ENCODE measurements at regions of chr20 and their contacts with region 1.

Region 1: DNA sequence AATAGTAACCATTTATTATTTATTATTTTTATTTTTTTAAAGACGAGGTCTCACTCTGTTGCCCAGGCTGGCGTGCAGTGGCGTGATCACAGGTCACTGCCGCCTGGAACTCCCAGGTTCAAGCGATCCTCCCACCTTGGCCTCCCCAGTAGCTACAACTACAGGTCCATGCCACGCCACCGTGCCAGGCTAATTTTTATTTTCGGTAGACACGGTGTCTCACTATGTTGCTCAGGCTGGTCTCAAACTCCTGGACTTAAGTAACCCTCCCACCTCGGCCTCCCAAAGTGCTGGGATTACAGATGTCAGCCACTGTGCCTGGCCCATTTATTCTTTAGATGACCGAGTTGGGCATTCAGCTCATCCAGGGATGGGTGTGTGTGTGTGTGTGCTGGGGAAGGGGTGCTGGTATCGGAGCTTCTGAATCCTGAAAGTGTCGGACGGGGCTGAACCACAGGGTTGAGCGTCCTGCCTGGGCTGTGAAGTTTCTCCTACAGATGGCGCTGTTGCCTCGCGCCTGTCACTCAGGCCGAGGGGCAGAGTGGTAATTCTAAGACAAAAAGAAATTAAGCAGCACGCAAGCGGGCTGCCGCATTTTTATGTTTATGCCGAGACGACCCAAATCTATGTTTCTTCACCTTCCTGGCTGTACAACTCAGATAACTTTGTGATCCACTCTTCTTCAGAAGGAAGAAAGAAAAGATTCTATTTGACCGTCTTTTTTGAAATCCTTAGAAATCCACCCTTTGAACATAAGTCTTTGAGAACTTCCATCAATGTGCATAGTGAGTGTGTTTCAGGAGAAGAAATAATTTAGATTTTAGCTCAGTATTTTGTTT is 252.8 kb downstream of the CDH26 start:
- DNase-seq: peak in 8 of 9 donors; percentile 20 to 61 (median 46)
- ATAC-seq: peak; percentile 81
- H3K4me3 ChIP-seq: no peak overlapping the region
- H3K4me3 Mint-ChIP-seq: peak overlapping the region in 1 of 10 donors; percentile 20
- H3K27ac ChIP-seq: no peak overlapping the region
- H3K27ac Mint-ChIP-seq: no peak overlapping the region
- H3K4me1 ChIP-seq: no peaks in the 10 kb centered on the region
- H3K4me1 Mint-ChIP-seq: peaks cover 0 to 17% (median 4%) of the 10 kb centered on the region in 7 donors
- H3K27me3 ChIP-seq: no peaks in the 10 kb centered on the region
- H3K27me3 Mint-ChIP-seq: peaks cover 0 to 16% (median 2%) of the 10 kb centered on the region in 5 donors

Region 2: DNA sequence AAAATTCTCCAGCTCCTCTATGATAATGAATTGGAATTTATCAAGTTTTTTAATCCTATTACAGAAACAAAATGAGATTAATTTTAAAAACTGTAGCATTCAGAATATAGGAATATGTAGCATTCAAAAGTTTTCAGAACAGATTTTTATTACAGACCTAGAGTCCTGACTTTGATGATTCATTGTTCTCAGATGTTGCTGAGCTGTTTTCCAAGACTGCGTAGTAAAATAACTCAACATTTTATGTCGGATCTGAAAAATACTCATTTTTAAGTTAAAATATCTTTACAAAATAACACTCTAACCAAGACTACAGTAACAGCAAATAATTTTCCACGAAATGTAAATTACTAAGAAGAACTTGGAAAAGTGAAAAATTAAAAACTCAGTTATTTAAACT is 344.7 kb before region 1 on chr20:
- CTCF ChIA-PET with region 1: no interaction called
- POLR2A ChIA-PET with region 1: no interaction called
- intact Hi-C with region 1: no loop called
- DNase-seq: no peak
- ATAC-seq: no peak
- H3K4me3 ChIP-seq: no peak overlapping the region
- H3K4me3 Mint-ChIP-seq: no peak overlapping the region
- H3K27ac ChIP-seq: no peak overlapping the region
- H3K27ac Mint-ChIP-seq: no peak overlapping the region
- H3K4me1 ChIP-seq: no peaks in the 10 kb centered on the region
- H3K4me1 Mint-ChIP-seq: no peaks in the 10 kb centered on the region
- H3K27me3 ChIP-seq: no peaks in the 10 kb centered on the region
- H3K27me3 Mint-ChIP-seq: peaks cover 0 to 9% (median 4%) of the 10 kb centered on the region in 5 donors

Region 3: DNA sequence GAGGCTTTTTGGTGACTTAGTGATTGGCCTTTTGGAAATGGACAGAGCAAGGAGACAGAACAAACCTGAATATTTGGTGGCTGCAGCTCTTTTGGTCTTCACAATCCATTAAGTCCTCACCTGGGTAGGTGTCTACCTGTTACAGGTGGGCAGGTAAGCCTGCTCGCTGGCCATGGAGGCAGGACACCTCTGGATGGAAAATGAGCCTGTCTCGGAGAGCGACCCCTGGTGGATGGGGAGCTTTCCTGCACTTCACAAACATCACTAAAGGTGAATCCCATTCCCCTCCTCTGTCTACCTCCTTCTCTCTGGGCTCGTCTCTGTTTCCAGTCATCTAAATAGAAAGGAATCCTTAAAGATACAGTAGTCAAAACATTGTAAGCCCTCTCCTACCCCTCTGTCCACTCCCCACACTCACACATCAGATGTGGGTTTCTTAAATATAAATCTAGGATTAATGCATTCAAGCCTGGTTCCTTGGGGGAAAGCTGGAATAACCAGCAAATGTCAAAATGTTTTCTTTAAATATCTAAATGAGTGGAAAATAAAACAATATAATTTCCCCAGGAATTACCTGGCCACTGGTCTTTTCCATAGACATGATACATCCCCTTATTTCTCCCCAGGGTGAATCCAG is 52.1 kb after region 1 on chr20:
- CTCF ChIA-PET with region 1: no interaction called
- POLR2A ChIA-PET with region 1: no interaction called
- intact Hi-C with region 1: loop called in 1 of 2 experiments (anchors 1 kb)
- DNase-seq: peak in 8 of 9 donors; percentile 26 to 57 (median 43)
- ATAC-seq: peak; percentile 52
- H3K4me3 ChIP-seq: no peak overlapping the region
- H3K4me3 Mint-ChIP-seq: no peak overlapping the region
- H3K27ac ChIP-seq: no peak overlapping the region
- H3K27ac Mint-ChIP-seq: no peak overlapping the region
- H3K4me1 ChIP-seq: peaks cover 0 to 10% of the 10 kb centered on the region in 2 donors
- H3K4me1 Mint-ChIP-seq: peaks cover 4 to 33% (median 23%) of the 10 kb centered on the region in 7 donors
- H3K27me3 ChIP-seq: no peaks in the 10 kb centered on the region
- H3K27me3 Mint-ChIP-seq: no peaks in the 10 kb centered on the region

Region 4: DNA sequence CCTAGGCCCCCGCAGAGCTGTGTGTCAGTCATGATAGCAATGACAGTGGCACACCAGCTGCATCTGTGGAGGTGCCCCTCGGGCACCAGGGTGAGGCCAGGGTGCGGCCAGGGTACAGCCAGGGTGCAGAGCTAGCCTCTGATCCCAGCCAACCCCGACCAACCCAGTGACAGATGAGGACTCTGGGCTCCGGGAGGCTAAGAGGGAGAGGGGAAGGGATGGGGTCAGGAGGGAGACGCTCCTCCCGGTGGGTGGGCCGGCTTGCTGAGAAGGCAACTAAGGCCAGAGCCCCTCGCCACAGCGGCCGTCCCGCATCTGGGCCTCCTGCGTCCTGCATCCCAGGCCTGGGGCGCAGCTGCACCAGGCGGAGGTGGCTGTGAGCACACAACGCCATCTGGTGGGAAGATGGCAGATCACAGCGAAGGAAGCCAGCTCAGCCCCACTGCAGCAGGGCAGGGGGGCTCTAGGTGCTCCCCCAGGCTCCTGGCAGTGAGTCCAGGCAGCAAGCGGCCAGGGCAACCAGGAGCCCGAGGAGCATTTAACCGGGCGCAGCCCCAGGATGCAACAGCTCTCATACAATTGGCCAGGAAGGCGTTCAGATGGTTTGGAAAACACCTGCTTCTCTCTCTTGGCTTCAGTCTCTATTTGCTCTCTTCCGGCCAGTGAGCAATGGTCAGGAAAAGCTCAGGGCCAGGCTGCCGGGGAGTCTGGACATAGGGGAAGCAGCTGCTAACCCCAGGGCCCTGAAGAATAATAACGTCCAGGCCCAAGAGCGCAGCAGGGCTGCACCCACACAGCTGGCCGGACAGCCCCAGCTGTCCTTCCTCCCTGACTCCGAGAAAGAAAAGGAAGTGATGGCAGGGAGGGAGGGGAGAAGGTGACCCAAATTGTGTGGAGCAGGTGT is 1685.3 kb after region 1 on chr20:
- CTCF ChIA-PET with region 1: no interaction called
- POLR2A ChIA-PET with region 1: no interaction called
- intact Hi-C with region 1: loop called in 1 of 2 experiments (anchors 2 kb)
- DNase-seq: peak in 3 of 9 donors; percentile 2 to 28 (median 12)
- ATAC-seq: no peak
- H3K4me3 ChIP-seq: no peak overlapping the region
- H3K4me3 Mint-ChIP-seq: no peak overlapping the region
- H3K27ac ChIP-seq: no peak overlapping the region
- H3K27ac Mint-ChIP-seq: no peak overlapping the region
- H3K4me1 ChIP-seq: no peaks in the 10 kb centered on the region
- H3K4me1 Mint-ChIP-seq: peaks cover 0 to 2% (median 0%) of the 10 kb centered on the region in 7 donors
- H3K27me3 ChIP-seq: no peaks in the 10 kb centered on the region
- H3K27me3 Mint-ChIP-seq: peaks cover 0 to 12% (median 0%) of the 10 kb centered on the region in 5 donors

Measured in naive thymus-derived CD4-positive, alpha-beta T cell (primary cell).